Activated CD4-positive, alpha-beta T cell treated with anti-CD3 and anti-CD28 coated beads for 36 hours (primary cell): ENCODE measurements at regions of chr3 and their contacts with region 1.

Region 1: DNA sequence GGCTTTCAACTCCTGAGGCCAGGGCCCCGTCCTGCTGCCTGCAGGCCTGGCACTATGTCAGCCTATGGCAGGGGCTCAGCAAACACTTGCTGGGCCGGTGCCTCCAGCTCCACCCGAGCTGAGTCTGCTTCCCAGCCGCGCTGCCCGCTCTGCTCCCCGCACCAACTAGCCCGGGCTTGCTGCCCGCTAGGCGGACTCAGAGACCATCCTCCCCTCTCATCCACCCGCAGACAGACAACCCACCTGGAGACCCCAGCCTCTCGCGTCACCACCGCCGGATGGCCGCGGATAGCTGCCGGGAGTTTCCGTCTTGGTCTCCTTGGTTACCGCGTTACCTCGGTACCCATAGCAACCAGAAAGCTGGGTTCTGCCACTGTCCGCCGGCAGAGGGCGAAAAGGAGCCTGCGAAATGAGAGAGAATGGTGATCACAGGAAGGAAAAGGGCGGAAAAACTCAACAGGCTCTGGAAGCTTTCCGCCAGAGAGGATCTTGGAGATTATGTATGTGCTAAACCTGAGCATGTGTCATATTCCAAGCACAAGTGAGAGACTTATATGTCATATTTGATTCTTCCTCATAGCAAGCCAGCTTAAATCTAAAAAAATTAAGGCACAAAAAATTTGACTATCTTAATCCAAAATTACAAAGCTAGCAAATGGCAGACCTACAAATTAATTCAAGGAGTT is at the start of gene ZBBX:
- DNase-seq: peak; percentile 91
- ATAC-seq: peak; percentile 95
- H3K4me3 Mint-ChIP-seq: peak within 1 kb of the TSS; percentile 71
- H3K27ac Mint-ChIP-seq: peak within 1 kb of the TSS; percentile 59
- H3K4me1 Mint-ChIP-seq: peaks cover 11% of the 10 kb centered on the region
- H3K27me3 Mint-ChIP-seq: peaks cover 9% of the 10 kb centered on the region
- total RNA-seq, gene ZBBX: not detected

Region 2: GRCh38 chr3:167684388-167684993 is 304.3 kb after region 1 on chr3:
- CTCF ChIA-PET with region 1: interaction called, 15 read pairs
- POLR2A ChIA-PET with region 1: no interaction called
- intact Hi-C with region 1: loop called (anchors 1 kb)
- DNase-seq: peak; percentile 47
- ATAC-seq: peak; percentile 57
- H3K4me3 Mint-ChIP-seq: no peak overlapping the region
- H3K27ac Mint-ChIP-seq: no peak overlapping the region
- H3K4me1 Mint-ChIP-seq: peaks cover 9% of the 10 kb centered on the region
- H3K27me3 Mint-ChIP-seq: no peaks in the 10 kb centered on the region

Region 3: DNA sequence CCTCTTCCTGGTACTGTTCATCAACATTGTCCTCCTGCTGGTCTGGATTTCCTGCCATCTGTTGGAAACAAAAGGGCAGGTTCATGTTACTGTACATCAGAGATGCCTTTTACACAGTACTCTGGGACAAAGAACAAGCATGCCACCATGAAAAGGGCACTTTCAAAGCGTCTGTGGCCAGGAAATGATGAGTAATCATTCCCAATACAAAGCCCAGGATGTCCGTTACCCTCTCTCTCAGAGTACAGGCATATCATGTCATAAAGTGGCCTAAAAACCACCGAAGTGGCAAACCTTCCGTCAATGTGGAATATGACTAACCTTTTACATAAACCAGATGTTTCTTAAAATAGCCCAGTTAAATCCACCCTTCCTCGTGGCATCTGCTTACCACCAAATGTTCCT is 644.4 kb after region 1 on chr3:
- CTCF ChIA-PET with region 1: no interaction called
- POLR2A ChIA-PET with region 1: no interaction called
- intact Hi-C with region 1: no loop called
- DNase-seq: peak; percentile 46
- ATAC-seq: peak; percentile 95
- H3K4me3 Mint-ChIP-seq: peak overlapping the region; percentile 5
- H3K27ac Mint-ChIP-seq: peak overlapping the region; percentile 78
- H3K4me1 Mint-ChIP-seq: peaks cover 17% of the 10 kb centered on the region
- H3K27me3 Mint-ChIP-seq: peaks cover 4% of the 10 kb centered on the region